ENCODE measurements at regions of chr20 and their contacts with region 1.

Region 1: GRCh38 chr20:49982346-49983122 is at the start of gene SNAI1:
- DNase-seq: peak; percentile 60 to 91 (median 80)
- ATAC-seq: peak; percentile 89 to 94 (median 92)
- H3K4me3 ChIP-seq: peak within 1 kb of the TSS; percentile 45 to 51
- H3K4me3 Mint-ChIP-seq: peak within 1 kb of the TSS; percentile 62 to 73 (median 69)
- H3K27ac ChIP-seq: no peak within 1 kb of the TSS
- H3K27ac Mint-ChIP-seq: peak within 1 kb of the TSS; percentile 19 to 85
- H3K4me1 ChIP-seq: peaks cover 3 to 29% of the 10 kb centered on the region in 2 experiments
- H3K4me1 Mint-ChIP-seq: peaks cover 29 to 32% (median 31%) of the 10 kb centered on the region in 3 donors
- H3K27me3 ChIP-seq: peaks cover 0 to 28% of the 10 kb centered on the region in 2 experiments
- H3K27me3 Mint-ChIP-seq: peaks cover 0 to 3% of the 10 kb centered on the region in 2 donors
- total RNA-seq, gene SNAI1: 0.95 to 3.1 (median 1.3) TPM

Region 2: GRCh38 chr20:50070991-50071888 is 88.7 kb after region 1 on chr20:
- CTCF ChIA-PET with region 1: interaction called, 13 to 51 read pairs
- POLR2A ChIA-PET with region 1: no interaction called
- DNase-seq: peak; percentile 63 to 95 (median 84)
- ATAC-seq: peak; percentile 98 to 100 (median 100)
- H3K4me3 ChIP-seq: peak overlapping the region; percentile 24 to 38
- H3K4me3 Mint-ChIP-seq: peak overlapping the region; percentile 53 to 68 (median 66)
- H3K27ac ChIP-seq: no peak overlapping the region
- H3K27ac Mint-ChIP-seq: no peak overlapping the region
- H3K4me1 ChIP-seq: peaks cover 2 to 12% of the 10 kb centered on the region in 2 experiments
- H3K4me1 Mint-ChIP-seq: peaks cover 2 to 7% (median 4%) of the 10 kb centered on the region in 3 donors
- H3K27me3 ChIP-seq: peaks cover 0 to 13% of the 10 kb centered on the region in 2 experiments
- H3K27me3 Mint-ChIP-seq: no peaks in the 10 kb centered on the region

Region 3: DNA sequence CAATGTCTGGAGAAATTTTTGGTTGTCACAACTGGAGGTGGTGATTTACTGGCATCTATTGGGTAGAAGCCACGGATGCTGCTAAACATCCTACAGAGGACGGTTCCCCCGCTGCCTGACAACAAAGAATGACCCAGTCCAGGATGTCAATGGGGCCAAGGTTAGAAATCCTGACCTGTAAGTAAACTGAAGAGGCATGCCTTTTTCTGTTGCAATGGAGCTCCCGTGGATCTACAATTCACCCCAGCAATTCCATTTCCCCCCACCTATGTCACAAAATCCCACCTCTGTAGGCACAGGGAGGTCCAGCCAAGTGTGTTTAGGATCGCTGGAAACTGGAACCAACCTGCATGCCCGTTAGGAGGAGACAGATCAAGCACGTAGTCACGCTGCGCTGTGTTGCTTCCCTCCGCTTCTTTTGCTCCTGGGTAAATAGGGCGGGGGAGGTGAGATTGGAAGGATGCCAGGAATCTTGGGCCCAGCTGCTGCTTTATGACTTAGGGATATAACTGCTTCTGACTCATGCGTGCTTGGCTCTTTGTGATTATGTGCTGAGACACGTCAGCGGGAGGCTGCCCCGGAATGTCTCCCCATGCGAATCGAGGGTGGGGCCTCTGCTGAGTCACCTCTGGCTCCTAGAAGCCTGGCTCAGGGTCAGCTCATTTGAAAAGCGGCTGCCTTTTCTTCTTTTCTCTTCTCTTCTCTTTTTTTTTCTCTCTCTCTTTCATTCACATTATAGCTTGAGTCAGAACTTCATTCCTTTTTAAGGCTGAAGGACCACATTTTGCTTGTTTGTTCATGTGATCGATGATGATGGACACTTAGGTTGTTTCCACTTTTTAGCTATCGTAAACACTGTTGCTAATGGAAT is 183.4 kb after region 1 on chr20:
- CTCF ChIA-PET with region 1: interaction called, 4 to 10 read pairs
- POLR2A ChIA-PET with region 1: no interaction called
- DNase-seq: peak; percentile 14 to 78 (median 38)
- ATAC-seq: peak; percentile 83 to 99 (median 92)
- H3K4me3 ChIP-seq: peak overlapping the region in 1 of 2 donors; percentile 9
- H3K4me3 Mint-ChIP-seq: peak overlapping the region; percentile 41 to 55 (median 54)
- H3K27ac ChIP-seq: no peak overlapping the region
- H3K27ac Mint-ChIP-seq: peak overlapping the region; percentile 28 to 42
- H3K4me1 ChIP-seq: peaks cover 0 to 11% of the 10 kb centered on the region in 2 experiments
- H3K4me1 Mint-ChIP-seq: peaks cover 9 to 14% (median 10%) of the 10 kb centered on the region in 3 donors
- H3K27me3 ChIP-seq: peaks cover 0 to 17% of the 10 kb centered on the region in 2 experiments
- H3K27me3 Mint-ChIP-seq: peaks cover 5 to 7% of the 10 kb centered on the region in 2 donors

Region 4: DNA sequence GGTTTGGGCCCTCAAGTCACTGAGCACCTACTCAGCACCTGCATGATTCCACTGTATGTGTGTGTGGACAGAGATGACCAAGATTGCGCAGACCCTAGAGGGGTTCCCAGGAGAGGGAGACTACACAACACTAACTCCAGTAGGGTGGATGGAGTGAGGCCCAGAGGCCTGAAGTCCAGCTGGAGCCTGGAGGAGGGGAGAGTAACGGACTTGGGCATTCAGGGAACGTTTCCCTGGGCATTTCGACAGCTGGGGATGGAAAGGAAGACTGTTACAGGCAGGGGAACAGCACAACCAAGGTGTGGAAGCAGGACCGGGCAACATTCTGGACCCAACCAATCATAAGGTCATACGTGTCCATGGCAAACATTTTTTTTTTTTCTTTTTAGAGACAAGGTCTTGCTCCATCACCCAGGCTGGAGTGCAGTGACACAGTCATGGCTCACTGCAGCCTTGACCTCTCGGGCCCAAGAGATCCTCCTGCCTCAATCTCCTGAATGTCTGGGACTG is 197.0 kb after region 1 on chr20:
- CTCF ChIA-PET with region 1: interaction called, 10 to 19 read pairs
- POLR2A ChIA-PET with region 1: no interaction called
- DNase-seq: no peak
- ATAC-seq: peak in 1 of 4 experiments; percentile 12
- H3K4me3 ChIP-seq: no peak overlapping the region
- H3K4me3 Mint-ChIP-seq: no peak overlapping the region
- H3K27ac ChIP-seq: no peak overlapping the region
- H3K27ac Mint-ChIP-seq: no peak overlapping the region
- H3K4me1 ChIP-seq: peaks cover 0 to 2% of the 10 kb centered on the region in 2 experiments
- H3K4me1 Mint-ChIP-seq: no peaks in the 10 kb centered on the region
- H3K27me3 ChIP-seq: peaks cover 0 to 13% of the 10 kb centered on the region in 2 experiments
- H3K27me3 Mint-ChIP-seq: peaks cover 0 to 8% of the 10 kb centered on the region in 2 donors